Activated naive CD4-positive, alpha-beta T cell treated with anti-CD3 and anti-CD28 coated beads, Interleukin-2, amount 10 ng/mL, durations not matched to agents 7 days and 5 days (primary cell): ENCODE measurements at regions of chr2 and their contacts with region 1.

Region 1: DNA sequence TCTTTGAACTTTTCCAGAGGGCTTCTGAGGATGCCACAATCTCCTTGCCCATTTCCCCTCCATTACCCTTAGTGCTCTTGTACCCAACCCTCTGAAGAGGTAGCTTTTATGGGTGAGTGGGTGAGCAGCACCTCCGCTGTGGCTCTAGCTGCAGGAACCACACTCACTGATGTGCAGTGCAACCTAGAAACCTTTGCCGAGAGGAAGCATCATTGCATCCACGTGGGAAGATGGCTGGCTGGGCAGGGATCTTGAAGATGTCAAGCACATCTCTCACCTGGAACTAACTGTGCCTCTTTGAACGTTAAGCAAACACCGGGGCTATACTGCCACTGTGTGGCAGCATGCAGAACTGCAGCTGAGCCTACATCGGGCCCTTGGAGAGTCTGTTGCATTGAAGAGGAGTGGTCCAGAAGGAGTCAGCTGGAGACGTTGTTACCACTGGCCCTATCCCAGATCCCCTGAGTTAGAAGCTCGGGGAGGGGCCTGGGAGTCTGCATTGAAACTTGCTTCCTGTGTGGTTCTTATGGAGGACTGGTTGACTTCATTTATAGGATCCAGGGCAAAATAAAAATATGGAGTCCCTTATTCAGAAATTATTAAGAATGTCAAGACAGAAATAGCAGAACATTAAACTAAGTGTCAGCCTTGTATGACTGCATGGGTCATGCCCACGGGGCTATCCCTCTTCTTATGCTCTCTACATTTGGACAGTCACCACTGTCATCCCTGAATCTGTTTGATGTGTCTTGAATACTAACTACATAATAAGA is 28.7 kb downstream of the IGFBP5 start:
- DNase-seq: peak; percentile 80
- H3K4me3 Mint-ChIP-seq: no peak overlapping the region
- H3K27ac Mint-ChIP-seq: no peak overlapping the region
- H3K4me1 Mint-ChIP-seq: no peaks in the 10 kb centered on the region
- H3K27me3 Mint-ChIP-seq: peaks cover 29% of the 10 kb centered on the region

Region 2: DNA sequence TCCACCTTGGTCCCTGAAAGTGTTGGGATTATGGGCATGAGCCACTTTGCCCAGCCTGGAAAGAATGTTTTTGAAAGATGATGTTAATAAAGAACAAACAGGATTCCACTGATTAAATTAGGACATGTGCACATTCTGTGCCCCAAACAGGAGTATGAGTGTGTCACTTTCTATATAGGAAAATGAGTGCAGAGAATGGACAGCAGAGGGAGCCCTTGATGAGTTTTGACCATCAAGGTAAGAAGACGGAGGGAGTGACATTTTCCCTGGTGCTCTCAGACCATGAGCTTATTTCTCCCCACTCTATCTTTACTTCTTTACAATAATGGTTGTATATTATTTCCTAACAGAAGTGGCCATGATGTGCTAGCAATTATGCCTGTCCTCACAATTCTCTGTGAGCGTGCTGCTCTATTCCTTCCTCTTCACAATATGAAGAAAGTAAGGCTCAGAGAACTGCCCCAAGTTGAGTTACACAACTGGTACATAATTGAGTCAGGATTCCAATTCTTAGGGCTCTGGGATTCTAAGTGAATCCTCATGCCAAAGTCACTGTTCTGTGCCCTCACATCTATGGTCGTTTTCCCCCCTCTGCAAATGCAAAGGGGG is 147.4 kb before region 1 on chr2:
- CTCF ChIA-PET with region 1: interaction called, 320 read pairs
- DNase-seq: peak; percentile 76
- H3K4me3 Mint-ChIP-seq: no peak overlapping the region
- H3K27ac Mint-ChIP-seq: no peak overlapping the region
- H3K4me1 Mint-ChIP-seq: no peaks in the 10 kb centered on the region
- H3K27me3 Mint-ChIP-seq: no peaks in the 10 kb centered on the region

Region 3: GRCh38 chr2:216525972-216526371 is 140.7 kb before region 1 on chr2:
- CTCF ChIA-PET with region 1: interaction called, 320 read pairs
- DNase-seq: no peak
- H3K4me3 Mint-ChIP-seq: no peak overlapping the region
- H3K27ac Mint-ChIP-seq: no peak overlapping the region
- H3K4me1 Mint-ChIP-seq: no peaks in the 10 kb centered on the region
- H3K27me3 Mint-ChIP-seq: peaks cover 4% of the 10 kb centered on the region

Region 4: GRCh38 chr2:216653931-216654365 is 12.7 kb before region 1 on chr2:
- CTCF ChIA-PET with region 1: interaction called, 10 read pairs
- DNase-seq: no peak
- H3K4me3 Mint-ChIP-seq: no peak overlapping the region
- H3K27ac Mint-ChIP-seq: no peak overlapping the region
- H3K4me1 Mint-ChIP-seq: peaks cover 5% of the 10 kb centered on the region
- H3K27me3 Mint-ChIP-seq: peaks cover 35% of the 10 kb centered on the region

Region 5: GRCh38 chr2:216949700-216950413 is 283.2 kb after region 1 on chr2:
- CTCF ChIA-PET with region 1: no interaction called
- DNase-seq: no peak
- H3K4me3 Mint-ChIP-seq: no peak overlapping the region
- H3K27ac Mint-ChIP-seq: no peak overlapping the region
- H3K4me1 Mint-ChIP-seq: no peaks in the 10 kb centered on the region
- H3K27me3 Mint-ChIP-seq: peaks cover 20% of the 10 kb centered on the region